Activated CD4-positive, alpha-beta T cell treated with anti-CD3 and anti-CD28 coated beads, Interleukin-2, amount 10 ng/mL, durations not matched to agents 24 days and 14 days (primary cell): ENCODE measurements at regions of chrX and their contacts with region 1.

Region 1: DNA sequence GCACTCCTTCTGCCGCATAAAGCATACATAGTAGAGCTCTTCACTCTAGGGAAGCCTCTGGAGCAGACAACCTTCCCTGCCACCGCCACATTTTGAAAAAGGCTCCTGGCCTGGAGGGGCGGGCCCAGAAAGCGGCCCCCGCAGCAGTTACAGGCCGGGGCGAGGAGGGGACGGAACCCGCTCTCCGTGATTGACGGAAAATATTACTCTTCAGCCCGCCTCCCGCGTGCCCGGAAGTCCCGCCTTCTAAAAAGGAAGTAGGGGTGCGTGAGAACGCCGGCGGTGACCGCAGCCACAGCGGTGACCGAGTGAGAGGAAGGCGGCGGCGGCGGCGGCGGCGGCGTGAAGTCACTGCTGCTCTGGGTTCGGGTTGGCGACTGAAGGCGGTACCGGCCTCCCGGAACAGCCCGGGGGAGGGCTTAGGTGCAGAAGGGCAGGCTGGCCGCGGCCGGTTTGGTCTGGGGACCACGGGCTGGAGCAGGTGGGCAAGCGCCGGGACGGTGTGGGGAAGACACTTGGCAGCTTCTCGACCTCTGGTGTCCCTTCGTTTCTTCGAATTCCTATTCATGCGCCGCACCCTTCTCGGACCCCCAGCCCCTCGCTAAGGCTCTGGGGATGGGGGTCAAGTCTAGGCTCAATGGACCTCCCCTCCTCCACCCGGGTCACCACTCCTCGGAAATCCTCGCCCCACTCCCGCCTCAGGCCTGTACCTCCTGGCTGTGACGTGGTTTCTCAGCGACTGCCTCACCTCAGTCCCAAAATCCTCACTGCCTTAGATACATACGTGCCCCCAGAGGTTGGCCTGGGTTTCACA is at the start of gene HCCS:
- DNase-seq: peak; percentile 95
- H3K4me3 Mint-ChIP-seq: peak within 1 kb of the TSS; percentile 92
- H3K27ac Mint-ChIP-seq: peak within 1 kb of the TSS; percentile 93
- H3K4me1 Mint-ChIP-seq: peaks cover 18% of the 10 kb centered on the region
- H3K27me3 Mint-ChIP-seq: no peaks in the 10 kb centered on the region
- total RNA-seq, gene HCCS: 26.0 and 27.2 TPM in 2 replicates

Region 2: DNA sequence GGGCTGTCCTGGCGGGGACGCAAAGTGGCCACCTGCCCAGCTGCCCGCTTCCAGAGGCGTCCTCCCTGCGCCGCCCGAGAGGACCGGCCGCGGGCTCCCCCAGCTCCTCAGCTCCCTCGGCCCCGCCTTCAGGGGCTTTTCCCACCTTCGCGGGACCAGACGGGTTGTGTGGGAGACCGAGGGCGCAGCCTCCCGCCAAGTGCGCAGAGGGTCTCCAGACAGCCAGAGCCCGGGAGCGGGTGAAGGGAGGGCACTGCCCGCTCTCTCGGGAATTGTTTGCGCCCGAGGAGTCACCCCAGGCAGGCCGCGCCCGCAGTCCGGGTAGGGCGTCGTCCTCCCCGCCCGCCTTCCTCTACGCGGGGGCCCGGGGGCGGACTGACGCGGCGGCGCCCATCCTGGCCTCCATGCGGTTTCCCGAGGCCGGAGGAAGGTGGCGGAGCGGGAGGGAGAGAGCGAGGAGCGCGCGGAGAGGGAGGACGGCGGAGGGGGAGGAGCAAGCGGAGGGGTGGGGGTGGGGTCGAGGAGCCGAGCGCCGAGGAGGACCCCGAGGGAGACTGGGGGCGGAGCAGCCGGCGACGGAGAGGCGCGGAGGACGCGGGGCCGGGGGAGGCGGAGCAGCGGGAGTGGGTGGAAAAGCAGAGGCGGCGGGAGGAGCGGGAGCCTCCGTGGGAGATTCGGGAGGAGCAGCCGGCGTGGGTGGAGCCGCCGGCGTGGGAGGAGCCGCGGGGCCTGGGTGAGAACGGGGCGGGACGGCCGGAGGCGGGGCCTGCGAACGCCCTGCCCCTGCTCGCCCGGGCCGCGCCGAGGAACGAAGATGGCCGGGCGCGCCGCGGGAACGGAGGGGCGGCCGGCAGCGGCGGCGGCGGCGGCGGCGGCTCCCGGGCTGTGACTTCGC is 1096.5 kb before region 1 on chrX:
- intact Hi-C with region 1: loop called (anchors 5 kb)
- DNase-seq: peak; percentile 94
- H3K4me3 Mint-ChIP-seq: peak overlapping the region; percentile 74
- H3K27ac Mint-ChIP-seq: peak overlapping the region; percentile 88
- H3K4me1 Mint-ChIP-seq: peaks cover 35% of the 10 kb centered on the region
- H3K27me3 Mint-ChIP-seq: peaks cover 6% of the 10 kb centered on the region

Region 3: GRCh38 chrX:10922158-10922557 is 189.1 kb before region 1 on chrX:
- intact Hi-C with region 1: no loop called
- DNase-seq: no peak
- H3K4me3 Mint-ChIP-seq: no peak overlapping the region
- H3K27ac Mint-ChIP-seq: no peak overlapping the region
- H3K4me1 Mint-ChIP-seq: no peaks in the 10 kb centered on the region
- H3K27me3 Mint-ChIP-seq: no peaks in the 10 kb centered on the region

Region 4: GRCh38 chrX:11319806-11320520 is 208.7 kb after region 1 on chrX:
- intact Hi-C with region 1: no loop called
- DNase-seq: no peak
- H3K4me3 Mint-ChIP-seq: no peak overlapping the region
- H3K27ac Mint-ChIP-seq: no peak overlapping the region
- H3K4me1 Mint-ChIP-seq: no peaks in the 10 kb centered on the region
- H3K27me3 Mint-ChIP-seq: no peaks in the 10 kb centered on the region